Panc1 (cell line): ENCODE measurements at regions of chr5 and their contacts with region 1.

Region 1: GRCh38 chr5:138065102-138065501 is 18.7 kb upstream of the WNT8A start:
- DNase-seq: no peak
- ATAC-seq: no peak
- H3K4me3 ChIP-seq: no peak overlapping the region
- H3K27ac ChIP-seq: no peak overlapping the region
- H3K4me1 ChIP-seq: no peaks in the 10 kb centered on the region
- H3K27me3 ChIP-seq: no peaks in the 10 kb centered on the region
- CTCF ChIP-seq: peak; percentile 69

Region 2: DNA sequence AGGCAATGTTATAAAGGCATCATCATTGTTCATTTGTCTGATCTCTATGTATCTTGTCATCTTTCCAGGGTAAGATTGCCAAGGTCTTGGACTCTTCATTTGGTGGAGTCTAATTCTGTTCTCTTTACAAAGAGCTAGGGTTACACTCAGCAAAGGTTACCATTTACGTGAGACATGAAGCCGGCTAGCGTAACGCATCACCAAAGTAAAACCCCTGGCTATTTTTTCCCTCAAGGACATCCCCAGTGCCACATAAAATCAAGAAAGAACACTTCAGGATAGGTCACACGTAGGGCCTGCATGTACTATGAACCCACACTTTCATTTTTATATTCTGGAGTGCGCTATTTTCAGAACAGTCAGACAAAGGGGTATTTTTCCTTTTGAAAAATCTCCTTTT is 217.4 kb before region 1 on chr5:
- CTCF ChIA-PET with region 1: interaction called, 11 read pairs
- POLR2A ChIA-PET with region 1: no interaction called
- in situ Hi-C with region 1: no loop called
- intact Hi-C with region 1: no loop called
- DNase-seq: no peak
- ATAC-seq: no peak
- H3K4me3 ChIP-seq: no peak overlapping the region
- H3K27ac ChIP-seq: no peak overlapping the region
- H3K4me1 ChIP-seq: no peaks in the 10 kb centered on the region
- H3K27me3 ChIP-seq: no peaks in the 10 kb centered on the region
- CTCF ChIP-seq: no peak

Region 3: DNA sequence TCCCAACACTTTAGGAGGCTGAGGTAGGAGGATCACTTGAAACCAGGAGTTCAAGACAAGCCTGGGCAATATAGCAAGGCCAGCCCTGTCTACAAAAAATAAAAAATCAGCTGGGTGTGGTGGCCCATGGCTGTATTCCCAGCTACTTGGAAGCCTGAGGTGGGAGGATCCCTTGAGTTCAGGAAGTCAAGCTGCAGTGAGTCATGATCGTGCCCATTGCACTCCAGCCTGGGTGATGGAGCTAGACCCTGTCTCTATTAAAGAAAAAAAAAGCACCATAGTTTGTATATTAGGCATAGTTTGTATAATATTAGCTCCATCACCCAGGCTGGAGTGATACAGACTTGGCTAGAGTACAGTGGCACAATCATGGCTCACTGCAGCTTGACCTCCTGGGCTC is 83.7 kb after region 1 on chr5:
- CTCF ChIA-PET with region 1: interaction called, 13 read pairs
- POLR2A ChIA-PET with region 1: interaction called, 3 read pairs
- in situ Hi-C with region 1: no loop called
- intact Hi-C with region 1: no loop called
- DNase-seq: no peak
- ATAC-seq: 0 out of 2 replicates have a peak, but pooled peaks have one; percentile 77
- H3K4me3 ChIP-seq: no peak overlapping the region
- H3K27ac ChIP-seq: no peak overlapping the region
- H3K4me1 ChIP-seq: no peaks in the 10 kb centered on the region
- H3K27me3 ChIP-seq: no peaks in the 10 kb centered on the region
- CTCF ChIP-seq: no peak